ENCODE measurements at regions of chr5 and their contacts with region 1.

Region 1: GRCh38 chr5:162174358-162174974 is 106.9 kb downstream of the GABRG2 start:
- DNase-seq: no peak
- H3K4me3 Mint-ChIP-seq: no peak overlapping the region
- H3K27ac Mint-ChIP-seq: no peak overlapping the region
- H3K4me1 Mint-ChIP-seq: no peaks in the 10 kb centered on the region
- H3K27me3 Mint-ChIP-seq: no peaks in the 10 kb centered on the region

Region 2: GRCh38 chr5:162119801-162120200 is 54.7 kb before region 1 on chr5:
- intact Hi-C with region 1: no loop called
- DNase-seq: no peak
- H3K4me3 Mint-ChIP-seq: no peak overlapping the region
- H3K27ac Mint-ChIP-seq: no peak overlapping the region
- H3K4me1 Mint-ChIP-seq: no peaks in the 10 kb centered on the region
- H3K27me3 Mint-ChIP-seq: no peaks in the 10 kb centered on the region

Region 3: DNA sequence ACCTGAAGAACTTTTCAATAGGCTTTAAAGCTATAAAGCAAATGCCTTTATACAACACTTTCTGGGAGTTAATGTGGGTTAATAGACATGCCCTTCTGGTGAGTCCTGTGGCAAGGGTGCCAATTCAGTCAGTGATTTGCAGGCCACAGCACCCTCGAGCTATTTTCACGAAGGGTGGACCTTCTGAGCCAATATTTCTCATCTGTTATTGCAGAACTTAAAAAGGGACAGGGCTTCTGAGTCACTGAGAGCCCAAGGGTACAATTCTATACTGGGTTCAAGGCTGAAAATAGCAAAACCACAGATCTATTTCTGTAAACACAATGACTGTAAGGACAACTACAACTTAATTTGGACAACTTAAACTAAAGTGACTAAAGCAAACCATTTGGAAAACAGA is 14.1 kb before region 1 on chr5:
- intact Hi-C with region 1: loop called (anchors 1 kb)
- DNase-seq: no peak
- H3K4me3 Mint-ChIP-seq: no peak overlapping the region
- H3K27ac Mint-ChIP-seq: no peak overlapping the region
- H3K4me1 Mint-ChIP-seq: no peaks in the 10 kb centered on the region
- H3K27me3 Mint-ChIP-seq: no peaks in the 10 kb centered on the region

Region 4: GRCh38 chr5:162323471-162323870 is 149.0 kb after region 1 on chr5:
- intact Hi-C with region 1: no loop called
- DNase-seq: no peak
- H3K4me3 Mint-ChIP-seq: no peak overlapping the region
- H3K27ac Mint-ChIP-seq: no peak overlapping the region
- H3K4me1 Mint-ChIP-seq: no peaks in the 10 kb centered on the region
- H3K27me3 Mint-ChIP-seq: no peaks in the 10 kb centered on the region

Measured in activated T-helper 1 cell treated with anti-CD3 and anti-CD28 coated beads, Interleukin-12 subunit alpha, Interleukin-12 subunit beta, Interleukin-2, Interleukin-4 antibody, amounts not matched to agents 30 ng/mL and 10 ng/mL and 1 ng/mL, durations not matched to agents 14 hours and 24 hours and 36 hours (primary cell).